ENCODE measurements at regions of chr1 and their contacts with region 1.

Region 1: DNA sequence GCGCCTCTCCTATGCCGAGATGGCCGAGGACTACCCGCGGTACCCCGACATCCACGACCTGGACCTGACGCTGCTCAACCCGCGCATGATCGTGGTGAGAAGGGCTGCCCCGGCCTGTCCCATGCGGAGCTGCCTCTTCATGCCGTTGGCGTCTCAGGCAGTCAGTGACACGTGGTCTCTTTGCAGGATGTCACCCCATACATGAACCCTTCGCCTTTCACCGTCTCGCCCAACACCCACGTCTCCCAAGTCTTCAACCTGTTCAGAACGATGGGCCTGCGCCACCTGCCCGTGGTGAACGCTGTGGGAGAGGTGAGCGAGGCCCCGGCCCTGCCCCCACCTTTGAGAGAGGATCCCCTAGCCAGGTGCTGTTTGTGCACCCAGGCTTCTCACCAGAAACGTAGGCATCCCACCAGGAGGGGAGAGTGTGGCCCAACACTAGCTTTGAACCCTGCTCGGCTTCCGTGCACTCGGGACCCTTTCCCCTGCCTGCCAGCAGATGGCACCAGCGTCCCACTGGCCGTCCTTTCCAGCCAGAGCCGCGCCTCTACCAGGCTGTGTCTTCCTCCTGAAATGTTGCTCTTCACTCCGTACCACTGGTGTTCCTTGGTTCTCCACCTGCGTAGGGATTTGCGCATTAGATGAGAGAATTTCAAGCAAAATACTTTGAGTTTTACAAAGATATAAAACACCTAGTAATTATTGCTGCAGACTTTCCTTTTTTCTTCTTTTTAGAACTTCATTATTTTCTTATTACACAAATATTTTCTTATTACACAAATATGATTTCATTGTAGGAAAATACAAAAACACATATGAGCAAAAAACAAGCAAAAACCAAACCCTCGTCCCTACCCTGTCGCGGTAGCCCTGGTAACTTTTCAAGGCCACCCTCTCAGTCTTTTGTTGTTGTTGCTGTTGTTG is 9.0 kb downstream of the NPPA start:
- DNase-seq: peak; percentile 35
- H3K4me3 ChIP-seq: no peak overlapping the region
- H3K27ac ChIP-seq: no peak overlapping the region
- H3K4me1 ChIP-seq: no peaks in the 10 kb centered on the region
- H3K27me3 ChIP-seq: no peaks in the 10 kb centered on the region
- CTCF ChIP-seq: peak; percentile 98 to 100

Region 2: GRCh38 chr1:11822096-11822495 is 16.5 kb before region 1 on chr1:
- CTCF ChIA-PET with region 1: interaction called, 11 read pairs
- dilution Hi-C with region 1: no loop called
- in situ Hi-C with region 1: no loop called
- intact Hi-C with region 1: no loop called
- DNase-seq: no peak
- H3K4me3 ChIP-seq: no peak overlapping the region
- H3K27ac ChIP-seq: no peak overlapping the region
- H3K4me1 ChIP-seq: peaks cover 9% of the 10 kb centered on the region
- H3K27me3 ChIP-seq: no peaks in the 10 kb centered on the region
- CTCF ChIP-seq: no peak

Region 3: DNA sequence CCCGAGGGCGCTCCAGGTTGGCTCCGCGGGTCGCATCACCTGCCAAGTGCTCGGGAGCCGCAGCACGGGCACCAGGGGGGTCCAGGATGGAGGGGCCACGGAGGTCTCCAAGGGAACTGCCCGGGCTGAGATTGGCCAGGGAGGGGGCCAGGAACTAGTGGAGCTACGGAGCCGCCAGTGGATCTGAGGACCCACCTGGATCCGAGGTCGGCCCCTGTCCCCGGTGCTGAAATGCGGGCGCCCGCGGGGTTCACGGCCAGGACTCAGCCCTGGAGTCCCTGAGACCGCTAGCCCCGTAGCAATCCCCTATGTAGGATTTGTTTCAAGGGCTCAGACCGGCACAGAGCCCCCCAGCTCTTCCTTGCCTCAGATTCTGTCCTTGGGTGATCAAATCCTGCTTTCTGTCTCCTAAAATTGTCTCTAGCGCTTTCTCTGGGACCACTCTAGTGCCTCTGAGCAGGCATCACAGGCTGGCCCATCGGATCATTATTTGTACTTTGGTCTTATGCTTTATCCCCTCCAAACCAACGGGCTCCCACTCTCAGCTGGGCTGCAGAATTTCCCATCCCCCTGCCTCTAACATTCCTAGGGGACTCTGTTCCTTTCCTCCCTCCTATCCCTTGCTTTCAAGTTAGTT is 60.3 kb after region 1 on chr1:
- CTCF ChIA-PET with region 1: interaction called, 5 read pairs
- dilution Hi-C with region 1: no loop called
- in situ Hi-C with region 1: loop called (anchors 5 kb)
- intact Hi-C with region 1: loop called (anchors 1 kb)
- DNase-seq: no peak
- H3K4me3 ChIP-seq: no peak overlapping the region
- H3K27ac ChIP-seq: no peak overlapping the region
- H3K4me1 ChIP-seq: peaks cover 3% of the 10 kb centered on the region
- H3K27me3 ChIP-seq: peaks cover 10% of the 10 kb centered on the region
- CTCF ChIP-seq: no peak

Region 4: GRCh38 chr1:11934302-11935056 is 95.9 kb after region 1 on chr1 and contains the start of gene PLOD1:
- CTCF ChIA-PET with region 1: interaction called, 11 read pairs
- dilution Hi-C with region 1: no loop called
- in situ Hi-C with region 1: no loop called
- intact Hi-C with region 1: no loop called
- DNase-seq: peak; percentile 82
- H3K4me3 ChIP-seq: peak within 1 kb of the TSS; percentile 74 to 85 (median 75)
- H3K27ac ChIP-seq: peak within 1 kb of the TSS; percentile 4
- H3K4me1 ChIP-seq: peaks cover 29% of the 10 kb centered on the region
- H3K27me3 ChIP-seq: no peaks in the 10 kb centered on the region
- CTCF ChIP-seq: no peak
- total RNA-seq, gene PLOD1: 107 to 197 TPM

Region 5: DNA sequence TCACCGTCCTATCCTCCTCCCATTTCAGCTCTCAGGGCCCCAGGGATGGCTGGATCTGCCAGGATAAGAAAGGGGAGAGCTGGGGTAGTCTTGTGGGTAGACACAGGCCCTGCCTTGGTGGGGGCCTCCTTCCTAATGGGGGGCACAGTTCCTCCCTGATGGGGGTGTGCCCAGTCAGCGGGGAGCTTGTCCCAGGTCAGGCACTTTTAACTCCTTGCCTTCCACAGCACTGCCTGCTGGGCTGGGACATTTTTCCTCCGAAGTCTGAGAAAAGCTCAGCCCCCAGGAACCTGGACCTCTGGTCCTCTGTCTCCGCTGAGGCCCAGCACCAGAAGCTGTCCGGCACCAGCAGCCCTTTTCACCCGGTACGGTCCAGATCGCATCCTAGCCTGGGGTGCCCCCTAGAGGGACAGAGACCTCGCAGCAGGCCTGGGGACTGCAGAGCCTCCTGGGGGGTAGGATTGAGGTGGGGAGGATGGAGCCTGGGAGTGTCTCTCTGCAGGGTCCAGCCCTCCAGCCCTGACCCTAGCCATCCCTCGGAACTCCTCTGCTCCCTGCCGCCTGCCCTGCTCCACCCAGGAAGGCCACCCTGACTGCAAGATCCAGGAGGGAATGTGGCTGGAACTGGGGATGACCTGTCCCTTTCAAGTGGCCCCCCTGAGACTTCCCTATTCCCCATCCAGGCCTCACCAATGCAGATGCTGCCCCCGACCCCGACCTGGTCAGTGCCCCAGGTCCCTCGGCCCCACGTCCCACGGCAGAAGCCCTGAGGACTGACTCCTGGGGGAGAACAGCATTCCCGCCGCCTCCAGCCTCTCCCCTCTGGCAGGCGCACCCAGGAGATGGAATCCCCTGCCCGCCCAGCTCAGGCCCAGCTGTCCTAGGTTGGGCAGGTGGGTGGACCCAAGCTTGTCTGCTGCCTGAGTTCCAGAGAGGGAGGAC is 192.7 kb after region 1 on chr1:
- CTCF ChIA-PET with region 1: interaction called, 13 read pairs
- dilution Hi-C with region 1: no loop called
- in situ Hi-C with region 1: no loop called
- intact Hi-C with region 1: loop called (anchors 2 kb)
- DNase-seq: peak; percentile 12
- H3K4me3 ChIP-seq: no peak overlapping the region
- H3K27ac ChIP-seq: no peak overlapping the region
- H3K4me1 ChIP-seq: no peaks in the 10 kb centered on the region
- H3K27me3 ChIP-seq: no peaks in the 10 kb centered on the region
- CTCF ChIP-seq: peak; percentile 32 to 52

Region 6: GRCh38 chr1:12063141-12064072 is 224.8 kb after region 1 on chr1 and contains the start of gene TNFRSF8:
- CTCF ChIA-PET with region 1: no interaction called
- dilution Hi-C with region 1: no loop called
- in situ Hi-C with region 1: no loop called
- intact Hi-C with region 1: no loop called
- DNase-seq: peak; percentile 15
- H3K4me3 ChIP-seq: peak within 1 kb of the TSS in 1 of 3 experiments; percentile 6
- H3K27ac ChIP-seq: no peak within 1 kb of the TSS
- H3K4me1 ChIP-seq: peaks cover 10% of the 10 kb centered on the region
- H3K27me3 ChIP-seq: peaks cover 27% of the 10 kb centered on the region
- CTCF ChIP-seq: no peak
- total RNA-seq, gene TNFRSF8: not detected